ENCODE measurements at regions of chr2 and their contacts with region 1.

Region 1: DNA sequence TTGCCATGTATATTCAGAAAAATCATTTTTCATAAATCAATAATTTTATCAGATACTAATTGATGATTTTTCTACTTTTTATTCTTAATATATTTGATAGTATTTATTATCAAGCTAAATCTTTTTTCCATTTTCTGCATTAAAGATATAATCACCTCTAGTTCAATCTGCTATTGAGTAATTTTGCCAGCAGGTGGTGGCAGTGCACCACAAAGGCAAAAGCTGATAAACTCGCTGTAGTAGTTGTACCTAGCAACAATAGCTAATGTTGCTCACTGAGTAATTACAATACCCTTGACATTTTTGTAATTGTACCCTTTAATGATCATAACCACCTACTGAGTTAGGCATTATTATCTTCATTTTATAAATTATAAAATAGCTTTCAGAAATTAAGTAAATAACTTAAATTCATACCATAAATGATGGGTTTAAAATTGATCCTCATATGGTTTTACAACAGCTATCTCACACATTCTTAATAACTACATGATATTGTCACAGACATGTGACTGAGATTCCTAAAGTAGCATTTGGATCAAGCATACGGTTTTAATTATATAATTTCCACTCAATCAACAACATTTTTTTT is 52.0 kb upstream of the CALCRL start:
- DNase-seq: peak; percentile 75
- H3K4me3 ChIP-seq: no peak overlapping the region
- H3K27ac ChIP-seq: peak overlapping the region; percentile 19
- H3K4me1 ChIP-seq: peaks cover 50% of the 10 kb centered on the region
- H3K27me3 ChIP-seq: no peaks in the 10 kb centered on the region
- CTCF ChIP-seq: peak; percentile 48 to 58
- POLR2A ChIP-seq: no peak

Region 2: GRCh38 chr2:186559848-186560247 is 940.2 kb before region 1 on chr2:
- CTCF ChIA-PET with region 1: no interaction called
- POLR2A ChIA-PET with region 1: no interaction called
- dilution Hi-C with region 1: no loop called
- intact Hi-C with region 1: no loop called
- DNase-seq: no peak
- H3K4me3 ChIP-seq: no peak overlapping the region
- H3K27ac ChIP-seq: no peak overlapping the region
- H3K4me1 ChIP-seq: peaks cover 14% of the 10 kb centered on the region
- H3K27me3 ChIP-seq: no peaks in the 10 kb centered on the region
- CTCF ChIP-seq: no peak
- POLR2A ChIP-seq: no peak

Region 3: GRCh38 chr2:187150670-187151069 is 349.4 kb before region 1 on chr2:
- CTCF ChIA-PET with region 1: no interaction called
- POLR2A ChIA-PET with region 1: no interaction called
- dilution Hi-C with region 1: no loop called
- intact Hi-C with region 1: no loop called
- DNase-seq: peak; percentile 45
- H3K4me3 ChIP-seq: no peak overlapping the region
- H3K27ac ChIP-seq: no peak overlapping the region
- H3K4me1 ChIP-seq: no peaks in the 10 kb centered on the region
- H3K27me3 ChIP-seq: no peaks in the 10 kb centered on the region
- CTCF ChIP-seq: no peak
- POLR2A ChIP-seq: no peak

Region 4: GRCh38 chr2:187482796-187483195 is 17.2 kb before region 1 on chr2:
- CTCF ChIA-PET with region 1: interaction called, 13 read pairs
- POLR2A ChIA-PET with region 1: no interaction called
- dilution Hi-C with region 1: no loop called
- intact Hi-C with region 1: no loop called
- DNase-seq: no peak
- H3K4me3 ChIP-seq: no peak overlapping the region
- H3K27ac ChIP-seq: no peak overlapping the region
- H3K4me1 ChIP-seq: peaks cover 22% of the 10 kb centered on the region
- H3K27me3 ChIP-seq: no peaks in the 10 kb centered on the region
- CTCF ChIP-seq: no peak
- POLR2A ChIP-seq: no peak

Region 5: DNA sequence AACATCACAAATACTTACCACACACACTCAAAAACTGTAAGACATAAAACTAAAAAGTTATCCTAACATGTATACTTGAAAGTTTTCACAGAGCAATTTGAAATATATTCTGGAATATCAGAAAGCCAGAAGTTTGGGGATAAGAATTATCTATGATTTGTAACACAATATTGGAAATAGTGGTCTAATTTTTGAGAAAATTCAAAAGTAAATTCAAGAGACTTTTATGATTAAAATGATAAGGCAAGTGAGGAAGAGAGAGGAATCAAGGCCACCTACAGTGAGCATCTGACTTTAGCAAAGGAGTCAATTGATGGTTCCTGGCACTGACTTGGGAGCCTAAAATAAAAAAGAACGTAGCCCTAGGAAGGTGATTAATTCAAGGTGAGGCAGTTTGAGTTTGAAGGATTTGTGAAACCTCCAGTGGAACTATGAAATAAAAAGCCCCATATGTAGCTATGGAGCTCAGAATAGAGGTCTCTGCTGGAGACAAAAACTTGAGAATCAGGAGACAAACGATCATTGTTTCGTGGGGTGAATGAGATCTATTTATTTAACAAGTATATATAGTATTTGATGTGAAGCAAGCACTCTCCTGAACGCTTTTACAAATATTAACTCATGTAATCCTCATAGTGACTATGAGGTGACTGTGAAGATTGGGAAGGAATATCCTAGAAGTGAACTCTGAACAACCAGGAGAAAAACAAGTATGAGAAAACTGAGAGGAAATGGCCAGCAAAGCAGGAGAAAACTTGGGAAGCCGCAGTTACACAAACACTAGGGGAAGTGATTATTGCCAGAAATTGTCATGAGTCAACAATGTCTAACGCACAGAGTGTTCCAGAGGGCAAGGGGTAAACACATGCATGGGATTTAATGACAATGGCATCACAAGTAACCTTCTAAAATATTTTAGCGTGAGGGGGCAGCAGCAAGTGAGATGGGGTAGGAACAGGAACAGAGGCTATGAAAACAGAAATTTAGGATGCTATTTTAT is 41.3 kb after region 1 on chr2:
- CTCF ChIA-PET with region 1: interaction called, 71 read pairs
- POLR2A ChIA-PET with region 1: no interaction called
- dilution Hi-C with region 1: no loop called
- intact Hi-C with region 1: loop called (anchors 1 kb)
- DNase-seq: peak; percentile 96
- H3K4me3 ChIP-seq: peak overlapping the region in 1 of 3 experiments; percentile 11
- H3K27ac ChIP-seq: peak overlapping the region; percentile 94
- H3K4me1 ChIP-seq: peaks cover 55% of the 10 kb centered on the region
- H3K27me3 ChIP-seq: no peaks in the 10 kb centered on the region
- CTCF ChIP-seq: no peak
- POLR2A ChIP-seq: peak; percentile 81

Region 6: DNA sequence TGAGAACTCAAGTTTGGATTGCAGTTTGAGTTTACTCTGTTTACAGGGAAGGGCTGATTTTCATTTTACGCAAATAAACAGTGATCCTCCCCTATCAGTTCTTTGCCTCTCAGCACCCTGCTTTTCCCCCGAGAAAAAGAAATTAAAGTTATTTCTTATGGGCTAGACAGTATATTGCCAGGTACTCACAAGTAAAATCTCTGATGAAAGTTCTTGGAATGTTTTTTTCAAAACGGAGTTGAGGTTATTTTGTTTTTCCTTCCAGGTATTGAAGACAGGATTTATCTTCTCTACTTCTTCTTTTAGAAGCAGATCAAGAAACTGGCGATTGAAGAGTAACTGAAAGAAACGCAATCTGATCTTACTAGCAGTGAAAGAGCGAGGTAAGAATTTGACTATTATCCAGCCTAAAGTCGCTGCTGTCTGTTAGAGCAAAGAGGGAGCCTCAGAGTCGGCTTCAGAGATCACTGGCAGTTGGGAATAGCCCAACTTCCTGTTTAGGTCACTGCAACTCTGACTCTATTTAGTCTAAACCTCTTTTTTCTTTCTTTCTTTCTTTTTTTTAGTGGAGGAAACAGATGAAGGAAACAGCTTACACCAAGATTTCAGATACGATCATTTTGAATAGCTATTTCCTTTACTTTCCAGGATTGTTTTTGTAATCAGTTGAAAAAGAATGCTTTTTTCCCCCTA is 54.1 kb after region 1 on chr2 and contains the start of gene TFPI:
- CTCF ChIA-PET with region 1: interaction called, 71 read pairs
- POLR2A ChIA-PET with region 1: interaction called, 6 read pairs
- dilution Hi-C with region 1: no loop called
- intact Hi-C with region 1: loop called (anchors 1 kb)
- DNase-seq: peak; percentile 93
- H3K4me3 ChIP-seq: peak within 1 kb of the TSS; percentile 82 to 95 (median 87)
- H3K27ac ChIP-seq: peak within 1 kb of the TSS; percentile 87
- H3K4me1 ChIP-seq: peaks cover 36% of the 10 kb centered on the region
- H3K27me3 ChIP-seq: no peaks in the 10 kb centered on the region
- CTCF ChIP-seq: no peak
- POLR2A ChIP-seq: peak; percentile 97
- total RNA-seq, gene TFPI: 266 and 286 TPM in 2 replicates

Region 7: DNA sequence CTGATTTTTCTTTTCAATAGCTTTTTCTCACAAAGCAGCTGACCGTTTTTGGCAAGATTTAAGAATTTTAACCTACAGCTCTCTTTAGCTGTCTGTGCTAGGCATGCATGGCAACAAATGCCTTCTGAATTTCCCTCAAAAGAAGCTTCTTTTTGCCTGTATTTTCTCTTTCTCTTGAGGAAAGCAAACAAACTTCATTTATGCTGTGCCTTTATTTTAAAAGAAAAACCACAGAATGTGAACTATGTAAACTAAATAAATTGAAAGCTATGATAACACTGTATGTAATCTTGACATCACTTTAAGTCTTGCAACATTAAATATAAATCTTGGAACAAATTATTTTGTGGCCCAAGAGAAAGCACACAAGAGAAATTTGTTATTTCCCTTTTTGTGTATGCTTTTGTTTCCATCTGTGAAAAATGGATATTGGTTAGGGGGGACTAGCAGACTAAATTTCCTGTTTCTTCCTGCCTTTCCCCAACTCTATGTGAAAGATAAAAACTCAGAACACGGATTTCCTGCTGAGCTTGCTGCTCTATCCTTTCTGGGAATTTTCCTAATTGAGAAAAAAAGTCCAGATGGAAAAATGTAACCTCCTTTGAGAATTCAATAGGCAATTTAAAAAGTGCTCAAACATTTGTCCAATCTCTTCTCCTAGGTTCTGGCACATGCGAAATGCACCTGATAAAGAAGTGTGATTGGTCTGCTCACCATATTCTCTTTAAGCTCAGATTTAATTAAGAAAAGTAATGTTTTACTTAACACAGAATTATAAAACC is 75.1 kb after region 1 on chr2:
- CTCF ChIA-PET with region 1: interaction called, 598 read pairs
- POLR2A ChIA-PET with region 1: interaction called, 4 read pairs
- dilution Hi-C with region 1: no loop called
- intact Hi-C with region 1: loop called (anchors 1 kb)
- DNase-seq: peak; percentile 90
- H3K4me3 ChIP-seq: peak overlapping the region in 1 of 3 experiments; percentile 19
- H3K27ac ChIP-seq: peak overlapping the region; percentile 57
- H3K4me1 ChIP-seq: peaks cover 27% of the 10 kb centered on the region
- H3K27me3 ChIP-seq: no peaks in the 10 kb centered on the region
- CTCF ChIP-seq: no peak
- POLR2A ChIP-seq: no peak

Region 8: DNA sequence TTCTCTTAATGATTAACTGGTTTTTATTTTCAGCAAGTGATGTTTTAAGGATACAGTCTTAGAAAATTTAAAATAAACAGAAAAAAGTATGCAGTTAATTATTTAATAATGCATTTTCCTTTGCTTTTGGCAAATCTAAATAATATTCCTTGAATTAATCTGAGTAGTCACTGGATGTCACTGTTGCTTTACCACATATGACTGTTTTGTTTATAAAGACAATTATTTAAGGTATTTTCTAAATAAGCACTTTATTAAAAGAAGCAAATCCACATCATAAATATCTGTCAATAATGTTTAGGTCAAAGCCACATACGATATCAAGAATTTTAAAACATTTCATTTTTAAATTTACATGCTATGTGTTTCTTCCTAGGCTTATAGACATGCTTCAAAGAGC is 94.8 kb after region 1 on chr2:
- CTCF ChIA-PET with region 1: interaction called, 24 read pairs
- POLR2A ChIA-PET with region 1: no interaction called
- dilution Hi-C with region 1: no loop called
- intact Hi-C with region 1: no loop called
- DNase-seq: peak; percentile 44
- H3K4me3 ChIP-seq: no peak overlapping the region
- H3K27ac ChIP-seq: no peak overlapping the region
- H3K4me1 ChIP-seq: no peaks in the 10 kb centered on the region
- H3K27me3 ChIP-seq: no peaks in the 10 kb centered on the region
- CTCF ChIP-seq: no peak
- POLR2A ChIP-seq: no peak

Region 9: DNA sequence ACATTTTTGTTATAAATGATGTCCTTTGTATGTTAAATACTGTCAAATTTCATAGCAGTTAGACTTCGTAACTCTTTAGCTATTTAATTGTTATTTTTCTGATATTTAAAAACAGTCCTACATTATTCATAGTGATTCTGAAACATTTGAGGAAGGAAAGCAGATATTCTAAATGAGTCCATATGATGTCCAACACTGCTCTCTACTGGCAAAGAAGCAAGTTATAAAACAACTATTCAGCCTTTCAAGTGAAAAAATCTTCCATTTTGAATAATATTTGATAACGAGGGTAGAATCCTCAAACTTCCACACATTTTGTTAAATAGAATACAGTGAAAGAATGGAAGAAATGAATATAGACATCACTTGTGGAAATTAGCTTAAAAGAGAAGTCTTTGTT is 1012.4 kb after region 1 on chr2:
- CTCF ChIA-PET with region 1: interaction called, 8 read pairs
- POLR2A ChIA-PET with region 1: no interaction called
- dilution Hi-C with region 1: no loop called
- intact Hi-C with region 1: loop called (anchors 2 kb)
- DNase-seq: peak; percentile 69
- H3K4me3 ChIP-seq: no peak overlapping the region
- H3K27ac ChIP-seq: no peak overlapping the region
- H3K4me1 ChIP-seq: peaks cover 2% of the 10 kb centered on the region
- H3K27me3 ChIP-seq: no peaks in the 10 kb centered on the region
- CTCF ChIP-seq: peak; percentile 9 to 32
- POLR2A ChIP-seq: no peak

Measured in endothelial cell of umbilical vein (primary cell).